Dorsolateral prefrontal cortex (tissue), 120 donors: ENCODE measurements at regions of chr17 and their contacts with region 1.

Region 1: GRCh38 chr17:16521070-16521727 is 29.2 kb upstream of the LRRC75A start:
- DNase-seq: peak in 9 of 10 donors; percentile 59 to 78 (median 67)
- H3K4me3 ChIP-seq: no peak overlapping the region
- H3K27ac ChIP-seq: no peak overlapping the region
- H3K27me3 ChIP-seq: peaks cover 0 to 5% (median 0%) of the 10 kb centered on the region in 45 donors
- CTCF ChIP-seq: peak; percentile 57 to 98 (median 92)

Region 2: GRCh38 chr17:15782866-15783265 is 738.3 kb before region 1 on chr17:
- intact Hi-C with region 1: no loop called
- DNase-seq: peak in 2 of 10 donors; percentile 10 to 31
- H3K4me3 ChIP-seq: peak overlapping the region in 57 of 59 donors; percentile 2 to 67 (median 46)
- H3K27ac ChIP-seq: peak overlapping the region in 2 of 59 donors; percentile 65 to 70
- H3K27me3 ChIP-seq: peaks cover 0 to 47% (median 11%) of the 10 kb centered on the region in 45 donors
- CTCF ChIP-seq: peak in 2 of 56 donors; percentile 9 to 29

Region 3: DNA sequence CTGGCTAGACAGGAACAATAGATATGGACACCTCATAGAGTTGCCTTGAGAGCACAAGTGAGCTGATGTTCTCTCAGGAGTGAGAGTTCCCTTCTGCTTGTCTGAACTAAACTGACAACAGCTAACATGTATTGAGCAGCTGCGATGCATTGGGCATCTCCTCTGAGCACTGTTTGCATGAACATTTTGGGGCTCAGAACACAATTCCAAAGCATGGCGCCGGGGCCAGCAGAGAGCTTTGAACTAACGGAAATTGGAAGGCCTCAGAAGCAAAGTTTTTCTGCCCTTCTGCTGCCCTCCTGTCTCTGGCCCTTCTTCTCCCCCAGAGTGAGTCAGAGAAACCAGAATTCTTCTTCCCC is 67.7 kb before region 1 on chr17:
- intact Hi-C with region 1: loop called (anchors 1 to 2 kb)
- DNase-seq: no peak
- H3K4me3 ChIP-seq: no peak overlapping the region
- H3K27ac ChIP-seq: peak overlapping the region in 9 of 59 donors; percentile 5 to 59 (median 14)
- H3K27me3 ChIP-seq: no peaks in the 10 kb centered on the region
- CTCF ChIP-seq: peak in 5 of 56 donors; percentile 0 to 10 (median 3)

Region 4: GRCh38 chr17:16459855-16460550 is 61.2 kb before region 1 on chr17:
- intact Hi-C with region 1: loop called in 1 of 2 experiments (anchors 2 kb)
- DNase-seq: no peak
- H3K4me3 ChIP-seq: no peak overlapping the region
- H3K27ac ChIP-seq: no peak overlapping the region
- H3K27me3 ChIP-seq: no peaks in the 10 kb centered on the region
- CTCF ChIP-seq: no peak

Region 5: GRCh38 chr17:16568541-16569357 is 47.5 kb after region 1 on chr17 and contains the start of gene ZNF287:
- intact Hi-C with region 1: no loop called
- DNase-seq: peak; percentile 94 to 98 (median 96)
- H3K4me3 ChIP-seq: peak within 1 kb of the TSS; percentile 60 to 100 (median 91)
- H3K27ac ChIP-seq: peak within 1 kb of the TSS in 57 of 59 donors; percentile 23 to 93 (median 84)
- H3K27me3 ChIP-seq: no peaks in the 10 kb centered on the region
- CTCF ChIP-seq: peak in 36 of 56 donors; percentile 8 to 61 (median 30)
- total RNA-seq, gene ZNF287: 9.2 to 29.9 (median 15.2) TPM